Activated B cell treated with CpG ODN at 0.5 μM for 24 hours (primary cell): ENCODE measurements at regions of chr17 and their contacts with region 1.

Region 1: GRCh38 chr17:40219073-40219860 is at the start of gene WIPF2:
- DNase-seq: peak; percentile 92
- ATAC-seq: peak; percentile 88
- H3K4me3 Mint-ChIP-seq: peak within 1 kb of the TSS; percentile 97
- H3K27ac Mint-ChIP-seq: peak within 1 kb of the TSS; percentile 100
- H3K4me1 Mint-ChIP-seq: peaks cover 30% of the 10 kb centered on the region
- H3K27me3 Mint-ChIP-seq: no peaks in the 10 kb centered on the region
- CTCF ChIP-seq: no peak
- total RNA-seq, gene WIPF2: 28.4 and 32.9 TPM in 2 replicates

Region 2: DNA sequence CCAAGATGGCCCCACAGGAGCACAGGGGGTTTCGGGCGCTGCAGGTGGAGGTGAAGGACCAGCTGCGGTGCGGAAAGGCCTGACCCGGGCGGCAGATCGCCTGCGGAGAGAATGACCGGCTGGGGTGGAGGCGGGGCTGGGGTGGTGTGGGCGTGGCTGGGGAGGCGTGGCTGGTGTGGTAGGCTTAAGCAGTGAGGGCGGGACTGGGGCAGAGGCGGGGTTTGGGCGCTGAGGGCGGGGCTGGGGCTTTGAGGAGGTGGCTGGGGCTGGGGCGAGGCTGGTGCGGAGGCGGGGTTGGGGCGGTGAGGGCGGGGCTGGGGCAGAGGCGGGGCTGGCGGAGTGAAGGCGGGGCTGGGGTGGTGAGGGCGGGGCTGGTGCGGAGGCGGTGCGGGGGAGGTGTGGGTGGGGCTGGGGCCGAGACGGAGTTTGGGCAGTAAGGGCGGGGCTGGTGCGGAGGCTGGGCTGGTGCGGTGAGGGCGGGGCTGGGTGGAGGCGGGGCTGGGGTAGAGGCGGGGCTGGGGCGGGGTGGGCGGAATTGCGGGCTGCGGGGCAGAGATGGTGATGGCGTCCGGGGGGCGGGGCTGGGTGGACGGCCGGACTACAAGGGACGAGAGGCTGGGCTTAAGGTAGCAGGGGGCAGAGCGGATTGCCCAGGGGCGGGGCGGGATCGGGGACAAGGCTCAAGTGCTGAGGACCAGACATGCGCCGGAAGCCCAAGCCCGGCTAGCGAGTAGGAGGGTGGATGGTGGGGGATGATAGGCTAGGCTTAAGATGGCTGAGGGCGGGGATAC is 266.4 kb before region 1 on chr17:
- CTCF ChIA-PET with region 1: no interaction called
- POLR2A ChIA-PET with region 1: no interaction called
- intact Hi-C with region 1: loop called (anchors 1 kb)
- DNase-seq: peak; percentile 88
- ATAC-seq: peak; percentile 85
- H3K4me3 Mint-ChIP-seq: peak overlapping the region; percentile 85
- H3K27ac Mint-ChIP-seq: peak overlapping the region; percentile 83
- H3K4me1 Mint-ChIP-seq: peaks cover 29% of the 10 kb centered on the region
- H3K27me3 Mint-ChIP-seq: no peaks in the 10 kb centered on the region
- CTCF ChIP-seq: no peak

Region 3: GRCh38 chr17:40203131-40203530 is 16.1 kb before region 1 on chr17:
- CTCF ChIA-PET with region 1: interaction called, 10 read pairs
- POLR2A ChIA-PET with region 1: interaction called, 5 read pairs
- intact Hi-C with region 1: loop called (anchors 1 kb)
- DNase-seq: no peak
- ATAC-seq: no peak
- H3K4me3 Mint-ChIP-seq: no peak overlapping the region
- H3K27ac Mint-ChIP-seq: no peak overlapping the region
- H3K4me1 Mint-ChIP-seq: peaks cover 4% of the 10 kb centered on the region
- H3K27me3 Mint-ChIP-seq: no peaks in the 10 kb centered on the region
- CTCF ChIP-seq: no peak